ENCODE measurements at regions of chr4 and their contacts with region 1.

Region 1: DNA sequence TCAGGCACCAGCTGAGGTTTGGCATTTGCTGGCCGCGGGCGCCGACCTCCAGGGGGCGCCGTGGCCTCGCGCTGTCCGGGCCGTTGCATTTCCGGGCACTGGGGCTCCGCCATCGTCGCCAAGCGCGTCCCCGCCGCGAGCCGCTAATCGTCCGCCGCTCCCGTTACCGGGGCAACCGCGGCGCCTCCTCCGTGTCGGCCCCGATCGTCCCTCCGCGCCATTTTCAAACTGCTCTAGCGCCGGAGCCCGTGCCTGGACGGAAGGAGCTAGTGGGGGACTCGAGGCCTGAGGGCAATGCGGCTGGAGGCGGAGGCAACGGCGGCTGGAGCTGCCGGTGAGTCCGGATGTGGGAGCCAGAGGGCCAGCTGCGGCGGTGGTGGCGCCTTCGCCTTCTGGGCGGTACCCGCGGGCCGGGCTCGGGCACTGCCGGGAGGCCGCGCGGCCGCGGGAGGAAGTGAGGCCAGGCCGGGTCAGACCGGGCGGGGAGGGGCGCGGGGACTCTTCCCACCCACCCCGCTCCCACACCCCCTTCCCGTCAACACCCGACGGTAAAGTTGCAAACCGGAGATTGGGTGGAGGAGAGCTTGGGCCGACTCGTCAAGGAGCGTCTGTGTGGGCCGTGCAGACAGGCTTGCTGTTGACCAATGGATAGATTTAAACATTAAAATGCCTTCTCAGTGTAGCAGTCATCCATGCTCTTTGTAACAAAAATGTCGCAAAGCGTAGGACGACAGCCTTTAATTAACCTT is at the start of gene CEP135:
- DNase-seq: peak; percentile 80 to 95 (median 90)
- H3K4me3 ChIP-seq: peak within 1 kb of the TSS; percentile 59 to 97 (median 85)
- H3K27ac ChIP-seq: peak within 1 kb of the TSS; percentile 10 to 93 (median 80)
- H3K27me3 ChIP-seq: no peaks in the 10 kb centered on the region
- CTCF ChIP-seq: peak; percentile 86 to 100 (median 97)
- total RNA-seq, gene CEP135: 3.8 to 10.7 (median 6.2) TPM

Region 2: DNA sequence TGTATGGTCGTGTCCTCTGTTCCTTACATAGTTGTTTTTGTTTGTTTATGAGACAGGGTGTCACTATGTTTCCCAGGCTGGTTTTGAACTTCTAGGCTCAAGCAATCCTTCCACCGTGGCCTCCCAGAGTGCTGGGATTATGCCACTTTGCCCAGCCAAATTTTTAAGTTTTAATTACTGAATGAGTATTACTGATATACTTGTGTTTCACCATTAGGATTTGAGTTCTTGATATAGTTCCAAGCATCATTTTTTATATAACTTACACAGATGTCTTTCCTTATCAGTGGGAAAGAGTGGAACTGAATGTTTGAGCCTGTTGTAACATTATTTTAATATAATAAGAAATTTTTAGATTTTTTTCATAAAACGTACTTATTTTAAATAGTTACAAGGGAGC is 532.7 kb before region 1 on chr4:
- intact Hi-C with region 1: no loop called
- DNase-seq: no peak
- H3K4me3 ChIP-seq: no peak overlapping the region
- H3K27ac ChIP-seq: peak overlapping the region in 2 of 59 donors; percentile 9 to 46
- H3K27me3 ChIP-seq: no peaks in the 10 kb centered on the region
- CTCF ChIP-seq: no peak

Region 3: GRCh38 chr4:55546756-55547465 is 402.0 kb before region 1 on chr4 and contains the start of gene CLOCK:
- intact Hi-C with region 1: loop called in 1 of 2 experiments (anchors 5 kb)
- DNase-seq: peak; percentile 70 to 88 (median 81)
- H3K4me3 ChIP-seq: peak within 1 kb of the TSS; percentile 63 to 98 (median 92)
- H3K27ac ChIP-seq: peak within 1 kb of the TSS; percentile 88 to 99 (median 98)
- H3K27me3 ChIP-seq: no peaks in the 10 kb centered on the region
- CTCF ChIP-seq: peak in 54 of 56 donors; percentile 16 to 72 (median 51)
- total RNA-seq, gene CLOCK: 24.9 to 52.2 (median 37.5) TPM

Region 4: DNA sequence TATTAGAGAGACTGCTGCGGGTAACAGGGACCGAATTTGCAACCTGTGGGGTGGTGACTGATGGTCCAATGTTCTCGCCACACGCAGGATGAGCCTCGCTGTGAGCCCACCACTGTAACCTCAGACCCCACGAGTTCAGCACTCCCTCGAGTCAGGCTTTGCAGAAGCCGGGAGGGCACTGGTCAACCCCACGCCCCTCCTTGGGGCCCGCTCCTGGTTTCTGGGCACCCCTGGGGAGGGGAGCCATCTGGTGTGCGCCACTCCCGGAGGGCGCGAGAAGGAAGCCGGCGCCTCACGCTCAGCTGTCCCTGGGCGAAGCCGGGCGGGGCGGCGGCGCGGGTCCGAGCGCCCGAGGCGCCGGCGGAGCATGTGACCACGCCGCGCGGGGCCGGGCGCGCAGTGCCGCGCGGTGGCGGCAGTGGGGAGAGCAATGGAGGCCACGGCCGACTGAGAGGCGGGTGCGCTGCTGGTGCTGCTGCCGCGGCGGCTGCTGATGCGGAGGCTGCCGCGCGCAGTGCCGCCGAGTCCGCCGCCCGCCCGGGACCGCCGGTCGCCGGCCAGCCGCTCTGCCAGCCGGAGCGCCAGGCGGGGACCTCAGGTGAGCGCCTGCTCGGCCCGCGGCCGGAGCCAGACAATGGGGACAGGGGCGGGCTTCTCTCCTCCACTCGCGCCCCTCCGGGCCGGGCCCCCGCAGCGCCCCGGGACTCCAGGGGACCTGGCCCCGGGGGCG is 100.0 kb after region 1 on chr4:
- intact Hi-C with region 1: loop called (anchors 1 to 2 kb)
- DNase-seq: peak in 9 of 10 donors; percentile 25 to 81 (median 53)
- H3K4me3 ChIP-seq: peak overlapping the region; percentile 58 to 87 (median 74)
- H3K27ac ChIP-seq: peak overlapping the region in 34 of 59 donors; percentile 4 to 79 (median 54)
- H3K27me3 ChIP-seq: peaks cover 0 to 3% (median 0%) of the 10 kb centered on the region in 45 donors
- CTCF ChIP-seq: peak in 33 of 56 donors; percentile 8 to 75 (median 41)

Region 5: DNA sequence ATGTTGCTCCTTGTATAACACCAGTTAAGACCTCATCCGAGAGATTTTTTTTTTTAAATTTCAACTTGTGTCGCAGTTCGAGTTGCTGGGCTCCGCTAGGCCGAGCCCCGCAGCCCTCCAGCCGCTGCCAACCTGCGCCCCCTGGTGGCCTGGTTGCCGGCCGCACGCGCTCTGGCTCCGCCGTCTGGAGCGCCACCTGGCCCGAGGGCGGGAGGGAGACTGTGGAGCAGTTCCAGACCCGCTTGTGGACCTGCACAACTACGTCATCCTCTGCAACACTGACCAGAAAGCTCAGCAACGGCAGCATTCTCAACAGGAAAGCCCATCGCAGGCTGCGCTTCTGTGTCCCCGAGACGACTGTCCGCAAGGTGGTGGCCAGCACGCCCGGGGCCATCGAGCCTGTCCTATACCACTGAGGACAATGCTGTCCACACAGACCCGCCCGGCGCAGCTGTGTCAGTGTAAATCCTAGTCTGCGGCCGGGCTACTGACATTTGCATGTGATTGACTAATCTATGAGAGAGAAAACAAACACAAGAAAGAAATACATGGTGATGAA is 595.8 kb after region 1 on chr4:
- intact Hi-C with region 1: loop called in 1 of 2 experiments (anchors 5 kb)
- DNase-seq: peak; percentile 79 to 94 (median 87)
- H3K4me3 ChIP-seq: peak overlapping the region; percentile 34 to 76 (median 55)
- H3K27ac ChIP-seq: peak overlapping the region in 57 of 59 donors; percentile 50 to 96 (median 85)
- H3K27me3 ChIP-seq: no peaks in the 10 kb centered on the region
- CTCF ChIP-seq: peak; percentile 83 to 100 (median 99)

Region 6: GRCh38 chr4:56977321-56978012 is 1028.6 kb after region 1 on chr4 and contains the start of gene NOA1:
- intact Hi-C with region 1: loop called in 1 of 2 experiments (anchors 10 kb)
- DNase-seq: peak; percentile 92 to 98 (median 96)
- H3K4me3 ChIP-seq: peak within 1 kb of the TSS; percentile 67 to 100 (median 93)
- H3K27ac ChIP-seq: peak within 1 kb of the TSS; percentile 18 to 96 (median 88)
- H3K27me3 ChIP-seq: no peaks in the 10 kb centered on the region
- CTCF ChIP-seq: peak in 22 of 56 donors; percentile 7 to 44 (median 23)
- total RNA-seq, gene NOA1: 7.5 to 14.3 (median 11.1) TPM